AG04450 (cell line): ENCODE measurements at regions of chr19 and their contacts with region 1.

Region 1: DNA sequence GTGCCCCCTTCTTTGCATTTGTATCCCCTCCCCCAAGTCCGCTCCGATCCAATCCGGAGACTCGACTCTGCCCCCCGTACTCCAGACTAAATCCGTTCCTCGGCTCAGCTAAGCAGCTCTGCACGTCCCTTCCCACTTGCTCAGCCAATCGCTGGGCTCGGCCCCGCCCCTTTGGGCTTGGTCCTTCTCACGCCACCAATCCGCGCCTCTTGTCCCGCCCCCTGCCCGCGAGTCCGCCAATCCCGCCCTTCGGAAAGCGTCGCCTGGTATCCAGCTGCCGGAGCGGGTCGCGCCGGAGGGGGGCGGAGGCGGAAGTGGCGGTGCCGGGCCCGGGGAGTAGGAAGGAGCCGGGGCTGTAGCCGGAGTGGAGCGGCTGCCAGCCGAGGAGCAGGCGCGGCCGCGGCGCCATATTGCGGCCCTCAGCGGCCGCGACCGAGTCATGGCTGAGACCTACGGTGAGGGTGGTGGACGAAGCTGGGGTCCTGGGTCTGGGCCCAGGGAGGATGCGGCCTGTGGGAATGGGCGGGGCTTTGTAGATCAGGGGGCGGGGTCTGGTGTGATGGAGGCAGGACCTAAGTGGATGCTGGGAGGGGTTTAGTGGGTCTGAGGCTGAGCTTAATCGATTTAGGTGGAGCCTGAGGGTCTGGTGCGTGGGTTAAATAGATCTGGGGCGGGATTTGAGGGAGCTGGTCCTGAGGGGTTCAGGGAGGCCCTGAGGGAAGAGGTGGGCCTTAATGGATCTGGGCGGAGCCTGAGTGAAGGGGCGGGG is at the start of gene RAB4B:
- DNase-seq: peak; percentile 100
- H3K4me3 ChIP-seq: peak within 1 kb of the TSS; percentile 75
- H3K27ac ChIP-seq: peak within 1 kb of the TSS; percentile 96
- H3K27me3 ChIP-seq: no peaks in the 10 kb centered on the region
- CTCF ChIP-seq: no peak
- polyA plus RNA-seq, gene RAB4B: 14.0 and 16.2 TPM in 2 replicates

Region 2: GRCh38 chr19:40716655-40717324 is 61.3 kb before region 1 on chr19 and contains the starts of genes COQ8B and ITPKC:
- CTCF ChIA-PET with region 1: interaction called, 3 read pairs
- POLR2A ChIA-PET with region 1: interaction called, 18 read pairs
- DNase-seq: peak; percentile 91
- H3K4me3 ChIP-seq: peak within 1 kb of the TSS; percentile 89
- H3K27ac ChIP-seq: peak within 1 kb of the TSS; percentile 100
- H3K27me3 ChIP-seq: no peaks in the 10 kb centered on the region
- CTCF ChIP-seq: no peak
- polyA plus RNA-seq, gene COQ8B: 16.0 and 20.2 TPM in 2 replicates
- polyA plus RNA-seq, gene ITPKC: 8.9 and 11.6 TPM in 2 replicates

Region 3: DNA sequence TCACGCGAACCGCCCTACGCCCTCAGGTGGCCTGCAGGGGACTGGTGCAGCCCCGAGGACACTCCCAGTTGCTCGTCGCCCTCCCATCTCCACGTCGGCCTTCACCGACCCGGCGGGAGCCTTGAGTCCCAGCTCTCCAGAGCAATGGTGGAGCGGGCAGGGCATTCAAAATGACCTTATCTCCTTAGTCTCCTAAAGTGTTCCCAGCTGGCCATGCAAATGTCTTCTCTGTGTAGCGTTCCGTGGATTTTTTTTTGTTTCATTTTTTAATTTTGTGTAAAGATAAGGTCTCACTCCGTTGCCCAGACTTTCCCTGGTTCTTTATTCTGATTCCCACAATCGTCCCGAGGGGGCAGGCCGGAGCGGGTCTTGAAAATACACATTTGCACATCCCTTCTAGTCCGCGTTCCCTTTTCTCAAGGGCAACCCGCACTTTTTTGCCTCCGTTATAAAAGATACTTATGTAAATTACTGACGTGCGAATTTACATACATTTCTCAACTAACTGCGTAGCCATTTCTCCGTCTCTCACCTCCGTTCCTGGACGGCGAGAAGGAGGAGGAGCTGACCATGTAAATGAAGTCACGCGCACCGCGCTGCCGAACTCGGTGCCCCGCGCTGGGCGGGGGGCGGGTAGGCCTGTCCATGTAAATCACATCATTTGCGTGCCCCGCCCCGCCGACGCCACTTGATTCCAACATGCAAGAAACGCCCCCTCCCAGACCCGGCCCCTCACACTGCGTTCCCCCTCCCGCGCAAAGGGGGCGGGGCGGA is 20.3 kb after region 1 on chr19:
- CTCF ChIA-PET with region 1: interaction called, 20 read pairs
- POLR2A ChIA-PET with region 1: interaction called, 20 read pairs
- DNase-seq: peak; percentile 99
- H3K4me3 ChIP-seq: peak overlapping the region; percentile 66
- H3K27ac ChIP-seq: peak overlapping the region; percentile 81
- H3K27me3 ChIP-seq: no peaks in the 10 kb centered on the region
- CTCF ChIP-seq: peak; percentile 61

Region 4: GRCh38 chr19:40806488-40807468 is 28.7 kb after region 1 on chr19:
- CTCF ChIA-PET with region 1: interaction called, 10 read pairs
- POLR2A ChIA-PET with region 1: interaction called, 6 read pairs
- DNase-seq: peak; percentile 77
- H3K4me3 ChIP-seq: peak overlapping the region; percentile 35
- H3K27ac ChIP-seq: peak overlapping the region; percentile 39
- H3K27me3 ChIP-seq: no peaks in the 10 kb centered on the region
- CTCF ChIP-seq: peak; percentile 94

Region 5: GRCh38 chr19:41023193-41023592 is 245.1 kb after region 1 on chr19:
- CTCF ChIA-PET with region 1: no interaction called
- POLR2A ChIA-PET with region 1: no interaction called
- DNase-seq: no peak
- H3K4me3 ChIP-seq: no peak overlapping the region
- H3K27ac ChIP-seq: no peak overlapping the region
- H3K27me3 ChIP-seq: peaks cover 2% of the 10 kb centered on the region
- CTCF ChIP-seq: no peak